ENCODE measurements at regions of chr1 and their contacts with region 1.

Region 1: DNA sequence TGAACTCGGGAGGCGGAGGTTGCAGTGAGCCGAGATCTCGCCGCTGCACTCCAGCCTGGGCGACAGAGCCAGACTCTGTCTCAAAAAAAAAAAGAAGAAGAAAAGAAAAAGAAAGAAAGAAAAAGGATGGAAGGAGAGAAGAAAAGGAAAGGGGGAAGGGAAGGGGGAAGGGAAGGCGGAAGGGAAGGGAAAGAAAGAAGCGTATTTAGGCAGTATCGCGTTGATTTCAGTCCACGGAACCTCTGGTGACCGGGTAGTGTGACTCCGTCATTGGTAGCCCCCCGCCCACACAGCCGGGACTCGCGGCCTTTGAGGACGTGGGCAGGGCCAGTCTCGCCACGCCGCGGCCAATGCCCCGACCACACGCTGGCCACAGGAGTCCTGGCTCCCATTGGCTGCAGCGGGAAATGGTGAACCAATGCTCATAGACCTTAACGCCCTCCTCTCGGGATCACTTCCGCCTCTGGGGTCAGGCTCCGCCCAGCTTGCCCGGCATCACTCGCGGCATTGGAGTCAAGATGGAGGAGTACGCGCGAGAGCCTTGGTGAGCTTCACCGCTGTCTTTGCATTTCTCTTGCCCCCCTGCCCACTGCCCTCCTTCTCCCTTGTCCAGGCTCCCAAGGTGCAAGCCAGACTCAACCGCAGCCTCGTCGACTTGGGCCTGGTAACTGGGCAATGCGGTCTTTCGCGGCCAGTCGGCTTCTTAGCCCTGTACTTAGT is at the start of gene TIMM17A:
- DNase-seq: peak; percentile 99
- H3K4me3 Mint-ChIP-seq: peak within 1 kb of the TSS; percentile 100
- H3K27ac Mint-ChIP-seq: peak within 1 kb of the TSS; percentile 93
- H3K4me1 Mint-ChIP-seq: peaks cover 16% of the 10 kb centered on the region
- H3K27me3 Mint-ChIP-seq: peaks cover 2% of the 10 kb centered on the region
- total RNA-seq, gene TIMM17A: 119 and 122 TPM in 2 replicates

Region 2: GRCh38 chr1:201703621-201704439 is 251.3 kb before region 1 on chr1:
- intact Hi-C with region 1: no loop called
- DNase-seq: peak; percentile 89
- H3K4me3 Mint-ChIP-seq: no peak overlapping the region
- H3K27ac Mint-ChIP-seq: no peak overlapping the region
- H3K4me1 Mint-ChIP-seq: no peaks in the 10 kb centered on the region
- H3K27me3 Mint-ChIP-seq: peaks cover 5% of the 10 kb centered on the region

Region 3: GRCh38 chr1:201982623-201983379 is 27.6 kb after region 1 on chr1 and contains the start of gene RNPEP:
- intact Hi-C with region 1: loop called (anchors 1 kb)
- DNase-seq: peak; percentile 89
- H3K4me3 Mint-ChIP-seq: peak within 1 kb of the TSS; percentile 93
- H3K27ac Mint-ChIP-seq: peak within 1 kb of the TSS; percentile 85
- H3K4me1 Mint-ChIP-seq: peaks cover 22% of the 10 kb centered on the region
- H3K27me3 Mint-ChIP-seq: peaks cover 12% of the 10 kb centered on the region
- total RNA-seq, gene RNPEP: 34.2 and 36.1 TPM in 2 replicates

Region 4: GRCh38 chr1:202112839-202113672 is 157.9 kb after region 1 on chr1:
- intact Hi-C with region 1: no loop called
- DNase-seq: no peak
- H3K4me3 Mint-ChIP-seq: no peak overlapping the region
- H3K27ac Mint-ChIP-seq: no peak overlapping the region
- H3K4me1 Mint-ChIP-seq: no peaks in the 10 kb centered on the region
- H3K27me3 Mint-ChIP-seq: peaks cover 4% of the 10 kb centered on the region